Activated naive CD4-positive, alpha-beta T cell treated with anti-CD3 and anti-CD28 coated beads for 36 hours (primary cell): ENCODE measurements at regions of chr17 and their contacts with region 1.

Region 1: DNA sequence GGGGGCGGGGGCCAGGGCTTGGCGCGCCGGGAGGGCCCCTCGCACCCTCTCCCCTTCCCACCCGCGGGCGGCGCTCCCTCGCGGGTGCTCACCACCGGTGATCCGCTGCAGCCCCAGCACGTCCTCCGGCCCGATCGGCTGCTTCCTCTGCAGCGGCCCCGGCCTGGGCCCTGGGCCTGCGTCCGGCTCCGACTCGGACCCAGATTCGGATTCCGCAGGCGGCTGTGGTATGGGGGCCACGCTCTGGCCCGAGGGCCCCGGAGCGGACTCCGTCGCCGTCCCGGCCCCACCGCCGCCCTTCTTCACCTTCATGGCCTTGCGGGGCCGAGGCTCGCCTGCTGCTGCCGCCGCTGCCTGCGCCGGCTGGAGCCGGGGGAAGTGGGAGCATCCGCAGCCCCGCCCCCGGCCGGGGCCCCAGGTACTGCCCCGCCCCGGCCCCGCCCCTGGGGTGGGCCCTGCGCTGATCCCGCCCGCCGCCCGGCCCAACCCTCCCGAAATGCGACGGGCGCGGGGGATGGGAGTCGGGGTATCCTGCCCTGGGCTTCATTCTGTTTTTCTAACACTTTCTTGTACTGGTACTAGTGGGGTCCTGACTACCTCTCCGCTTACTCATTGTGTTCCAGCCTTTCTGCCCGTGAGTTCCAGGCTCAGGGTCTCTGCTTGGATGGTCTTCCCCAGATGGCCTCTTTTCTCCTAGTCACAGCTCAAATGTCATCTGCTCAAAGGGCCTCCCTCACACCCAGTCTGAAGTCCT is at the start of gene UNC119:
- DNase-seq: peak; percentile 83
- H3K4me3 Mint-ChIP-seq: peak within 1 kb of the TSS; percentile 90
- H3K27ac Mint-ChIP-seq: peak within 1 kb of the TSS; percentile 52
- H3K4me1 Mint-ChIP-seq: peaks cover 45% of the 10 kb centered on the region
- H3K27me3 Mint-ChIP-seq: no peaks in the 10 kb centered on the region
- total RNA-seq, gene UNC119: 48.6 to 50.3 TPM

Region 2: GRCh38 chr17:28318759-28319660 is 233.4 kb before region 1 on chr17 and contains the start of gene TMEM97:
- CTCF ChIA-PET with region 1: no interaction called
- intact Hi-C with region 1: loop called (anchors 5 kb)
- DNase-seq: peak; percentile 95
- H3K4me3 Mint-ChIP-seq: peak within 1 kb of the TSS; percentile 81
- H3K27ac Mint-ChIP-seq: peak within 1 kb of the TSS; percentile 75
- H3K4me1 Mint-ChIP-seq: peaks cover 24% of the 10 kb centered on the region
- H3K27me3 Mint-ChIP-seq: no peaks in the 10 kb centered on the region
- total RNA-seq, gene TMEM97: 25.1 to 26.0 TPM

Region 3: GRCh38 chr17:28357061-28357900 is 195.1 kb before region 1 on chr17 and contains the start of gene POLDIP2:
- CTCF ChIA-PET with region 1: interaction called, 4 read pairs
- intact Hi-C with region 1: loop called (anchors 5 kb)
- DNase-seq: peak; percentile 97
- H3K4me3 Mint-ChIP-seq: peak within 1 kb of the TSS; percentile 94
- H3K27ac Mint-ChIP-seq: peak within 1 kb of the TSS; percentile 74
- H3K4me1 Mint-ChIP-seq: peaks cover 33% of the 10 kb centered on the region
- H3K27me3 Mint-ChIP-seq: no peaks in the 10 kb centered on the region
- total RNA-seq, gene POLDIP2: 74.6 to 76.5 TPM

Region 4: GRCh38 chr17:28494445-28495188 is 57.8 kb before region 1 on chr17:
- CTCF ChIA-PET with region 1: interaction called, 51 read pairs
- intact Hi-C with region 1: loop called (anchors 2 kb)
- DNase-seq: peak; percentile 89
- H3K4me3 Mint-ChIP-seq: no peak overlapping the region
- H3K27ac Mint-ChIP-seq: no peak overlapping the region
- H3K4me1 Mint-ChIP-seq: no peaks in the 10 kb centered on the region
- H3K27me3 Mint-ChIP-seq: no peaks in the 10 kb centered on the region

Region 5: GRCh38 chr17:28576758-28577465 is 24.5 kb after region 1 on chr17 and contains the start of gene ALDOC:
- CTCF ChIA-PET with region 1: interaction called, 24 read pairs
- intact Hi-C with region 1: loop called (anchors 1 kb)
- DNase-seq: peak; percentile 98
- H3K4me3 Mint-ChIP-seq: peak within 1 kb of the TSS; percentile 80
- H3K27ac Mint-ChIP-seq: peak within 1 kb of the TSS; percentile 84
- H3K4me1 Mint-ChIP-seq: peaks cover 40% of the 10 kb centered on the region
- H3K27me3 Mint-ChIP-seq: no peaks in the 10 kb centered on the region
- total RNA-seq, gene ALDOC: 65.6 to 66.2 TPM

Region 6: GRCh38 chr17:28612936-28613872 is 60.8 kb after region 1 on chr17:
- CTCF ChIA-PET with region 1: interaction called, 8 read pairs
- intact Hi-C with region 1: loop called (anchors 1 kb)
- DNase-seq: peak; percentile 52
- H3K4me3 Mint-ChIP-seq: no peak overlapping the region
- H3K27ac Mint-ChIP-seq: no peak overlapping the region
- H3K4me1 Mint-ChIP-seq: peaks cover 3% of the 10 kb centered on the region
- H3K27me3 Mint-ChIP-seq: no peaks in the 10 kb centered on the region